Naive thymus-derived CD4-positive, alpha-beta T cell (primary cell): ENCODE measurements at regions of chr1 and their contacts with region 1.

Region 1: DNA sequence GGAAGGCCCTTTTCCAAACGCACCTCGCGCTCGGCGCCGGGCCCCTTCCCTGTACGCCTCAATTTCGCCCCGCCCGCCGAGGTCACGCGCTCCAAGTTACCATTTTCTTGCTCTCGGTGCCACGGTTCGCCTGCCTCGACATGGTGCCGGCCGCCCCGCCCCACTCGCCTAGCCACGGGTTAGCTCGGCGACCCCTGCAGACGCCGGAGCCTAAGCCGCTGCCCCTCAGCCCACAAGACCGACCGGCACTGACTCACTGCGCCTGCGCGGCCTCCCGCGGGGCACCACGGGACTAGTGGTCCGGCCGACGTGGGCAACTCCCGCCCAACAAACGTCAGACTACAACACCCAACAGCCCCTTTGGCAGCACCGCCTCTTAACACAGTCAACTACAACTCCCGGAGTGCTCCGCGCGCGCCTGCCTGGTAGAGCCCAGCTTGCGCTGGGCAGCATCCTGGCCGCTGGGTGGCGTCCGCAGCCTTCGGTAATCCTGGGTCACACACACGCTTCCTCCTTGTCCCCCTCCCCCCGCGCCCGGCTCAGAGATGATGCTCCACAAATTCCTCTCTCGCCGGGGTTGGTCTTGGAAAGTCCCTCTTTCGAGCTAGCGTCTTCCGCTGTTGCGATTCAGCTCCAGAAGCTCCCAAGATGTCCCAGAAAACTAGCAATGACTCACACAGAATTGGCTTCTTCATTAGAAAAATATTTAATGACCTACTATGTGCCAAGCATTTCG is at the start of gene TRAPPC3:
- DNase-seq: peak; percentile 96 to 100 (median 99)
- ATAC-seq: peak; percentile 96
- H3K4me3 ChIP-seq: peak within 1 kb of the TSS; percentile 95
- H3K4me3 Mint-ChIP-seq: peak within 1 kb of the TSS; percentile 90 to 100 (median 98)
- H3K27ac ChIP-seq: peak within 1 kb of the TSS; percentile 91
- H3K27ac Mint-ChIP-seq: peak within 1 kb of the TSS; percentile 97 to 100 (median 98)
- H3K4me1 ChIP-seq: peaks cover 35 to 52% of the 10 kb centered on the region in 2 donors
- H3K4me1 Mint-ChIP-seq: peaks cover 48 to 84% (median 66%) of the 10 kb centered on the region in 7 donors
- H3K27me3 ChIP-seq: no peaks in the 10 kb centered on the region
- H3K27me3 Mint-ChIP-seq: no peaks in the 10 kb centered on the region
- total RNA-seq, gene TRAPPC3: 32.1 to 60.5 (median 47.2) TPM

Region 2: DNA sequence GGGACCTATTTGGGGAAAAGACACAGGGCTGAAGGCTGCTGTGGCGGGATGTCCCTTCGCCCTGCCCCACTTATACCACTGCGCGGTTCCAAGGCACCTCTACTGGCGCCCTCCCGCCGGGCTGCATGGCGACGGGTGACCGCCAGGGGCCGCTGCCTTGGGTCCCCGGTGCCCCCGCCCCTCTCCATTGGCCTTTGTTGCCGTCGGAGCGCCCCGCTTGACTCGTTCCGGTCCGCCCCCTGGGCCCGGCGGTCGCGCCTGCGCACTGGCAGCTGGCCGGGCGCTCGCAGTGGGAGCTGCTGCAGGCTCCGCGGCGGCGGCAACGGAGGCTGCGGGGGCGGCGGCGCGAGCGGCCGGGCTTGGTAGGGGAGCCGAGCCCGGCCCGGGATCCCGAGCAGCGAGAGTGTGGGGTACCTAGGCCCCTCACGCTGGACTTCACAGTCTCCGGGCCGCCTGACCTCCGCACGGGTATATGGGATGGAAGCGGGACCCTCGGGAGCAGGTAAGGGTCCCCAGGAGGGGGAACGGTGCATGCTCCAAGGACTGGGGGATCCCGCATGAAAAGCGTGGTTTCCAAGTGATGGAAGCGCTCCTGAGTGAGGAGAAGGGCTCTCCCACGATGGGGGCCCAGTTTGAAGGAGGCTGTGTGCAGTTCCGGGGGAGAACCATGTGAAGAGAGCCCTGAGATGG is 266.3 kb before region 1 on chr1 and contains the start of gene AGO1:
- CTCF ChIA-PET with region 1: no interaction called
- POLR2A ChIA-PET with region 1: no interaction called
- intact Hi-C with region 1: loop called in 1 of 2 experiments (anchors 1 kb)
- DNase-seq: peak; percentile 94 to 99 (median 97)
- ATAC-seq: peak; percentile 100
- H3K4me3 ChIP-seq: peak within 1 kb of the TSS; percentile 100
- H3K4me3 Mint-ChIP-seq: peak within 1 kb of the TSS; percentile 90 to 98 (median 94)
- H3K27ac ChIP-seq: peak within 1 kb of the TSS; percentile 79
- H3K27ac Mint-ChIP-seq: peak within 1 kb of the TSS; percentile 72 to 92 (median 84)
- H3K4me1 ChIP-seq: peaks cover 9 to 24% of the 10 kb centered on the region in 2 donors
- H3K4me1 Mint-ChIP-seq: peaks cover 37 to 55% (median 51%) of the 10 kb centered on the region in 7 donors
- H3K27me3 ChIP-seq: no peaks in the 10 kb centered on the region
- H3K27me3 Mint-ChIP-seq: peaks cover 0 to 4% (median 0%) of the 10 kb centered on the region in 5 donors
- total RNA-seq, gene AGO1: 22.5 to 28.0 (median 26.9) TPM

Region 3: GRCh38 chr1:35945327-35945726 is 204.1 kb before region 1 on chr1:
- CTCF ChIA-PET with region 1: no interaction called
- POLR2A ChIA-PET with region 1: no interaction called
- intact Hi-C with region 1: no loop called
- DNase-seq: no peak
- ATAC-seq: no peak
- H3K4me3 ChIP-seq: no peak overlapping the region
- H3K4me3 Mint-ChIP-seq: no peak overlapping the region
- H3K27ac ChIP-seq: no peak overlapping the region
- H3K27ac Mint-ChIP-seq: peak overlapping the region in 1 of 9 donors; percentile 58
- H3K4me1 ChIP-seq: peaks cover 8% of the 10 kb centered on the region in 2 donors
- H3K4me1 Mint-ChIP-seq: peaks cover 37 to 64% (median 58%) of the 10 kb centered on the region in 7 donors
- H3K27me3 ChIP-seq: no peaks in the 10 kb centered on the region
- H3K27me3 Mint-ChIP-seq: no peaks in the 10 kb centered on the region

Region 4: GRCh38 chr1:36099681-36100341 is 49.6 kb before region 1 on chr1:
- CTCF ChIA-PET with region 1: interaction called, 4 read pairs
- POLR2A ChIA-PET with region 1: no interaction called
- intact Hi-C with region 1: loop called (anchors 1 kb)
- DNase-seq: peak; percentile 50 to 79 (median 65)
- ATAC-seq: peak; percentile 92
- H3K4me3 ChIP-seq: no peak overlapping the region
- H3K4me3 Mint-ChIP-seq: peak overlapping the region in 5 of 10 donors; percentile 12 to 50 (median 35)
- H3K27ac ChIP-seq: no peak overlapping the region
- H3K27ac Mint-ChIP-seq: peak overlapping the region in 1 of 9 donors; percentile 14
- H3K4me1 ChIP-seq: no peaks in the 10 kb centered on the region
- H3K4me1 Mint-ChIP-seq: peaks cover 0 to 10% (median 2%) of the 10 kb centered on the region in 7 donors
- H3K27me3 ChIP-seq: no peaks in the 10 kb centered on the region
- H3K27me3 Mint-ChIP-seq: no peaks in the 10 kb centered on the region

Region 5: DNA sequence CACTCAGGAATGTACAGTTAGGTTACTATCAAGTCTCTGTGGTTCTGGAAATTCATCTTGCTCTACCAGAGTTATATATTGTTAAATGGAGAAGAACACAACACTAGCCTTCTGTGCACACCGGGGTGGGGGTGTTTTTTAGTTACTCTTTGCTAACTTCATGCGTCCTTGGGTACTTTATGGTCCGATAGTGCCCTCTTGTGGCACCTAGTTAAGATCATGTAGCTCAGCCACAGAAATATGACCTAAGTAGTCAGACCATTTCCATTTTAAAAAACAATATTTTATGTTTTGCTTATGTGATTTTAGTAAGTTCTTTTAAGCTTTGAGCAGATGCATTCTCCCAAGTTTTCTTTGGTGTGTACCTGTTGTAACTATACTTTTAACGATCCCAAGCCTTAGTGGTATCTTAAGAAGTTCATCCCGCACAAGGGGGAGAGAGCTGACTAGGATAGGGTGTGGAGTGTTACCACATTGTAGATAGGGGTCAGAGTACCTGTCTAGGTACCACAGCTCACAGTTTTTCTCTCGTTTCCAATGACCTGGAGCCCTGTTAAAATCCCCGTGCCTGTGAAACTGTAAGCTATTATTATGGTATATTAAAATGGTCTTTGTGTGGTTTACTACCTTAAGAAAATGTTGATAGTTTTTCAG is 136.2 kb after region 1 on chr1:
- CTCF ChIA-PET with region 1: interaction called, 30 read pairs
- POLR2A ChIA-PET with region 1: interaction called, 12 read pairs
- intact Hi-C with region 1: loop called (anchors 1 kb)
- DNase-seq: peak in 7 of 9 donors; percentile 60 to 80 (median 73)
- ATAC-seq: peak; percentile 96
- H3K4me3 ChIP-seq: no peak overlapping the region
- H3K4me3 Mint-ChIP-seq: no peak overlapping the region
- H3K27ac ChIP-seq: no peak overlapping the region
- H3K27ac Mint-ChIP-seq: peak overlapping the region in 8 of 9 donors; percentile 3 to 87 (median 42)
- H3K4me1 ChIP-seq: no peaks in the 10 kb centered on the region
- H3K4me1 Mint-ChIP-seq: peaks cover 4 to 34% (median 17%) of the 10 kb centered on the region in 7 donors
- H3K27me3 ChIP-seq: no peaks in the 10 kb centered on the region
- H3K27me3 Mint-ChIP-seq: no peaks in the 10 kb centered on the region

Region 6: DNA sequence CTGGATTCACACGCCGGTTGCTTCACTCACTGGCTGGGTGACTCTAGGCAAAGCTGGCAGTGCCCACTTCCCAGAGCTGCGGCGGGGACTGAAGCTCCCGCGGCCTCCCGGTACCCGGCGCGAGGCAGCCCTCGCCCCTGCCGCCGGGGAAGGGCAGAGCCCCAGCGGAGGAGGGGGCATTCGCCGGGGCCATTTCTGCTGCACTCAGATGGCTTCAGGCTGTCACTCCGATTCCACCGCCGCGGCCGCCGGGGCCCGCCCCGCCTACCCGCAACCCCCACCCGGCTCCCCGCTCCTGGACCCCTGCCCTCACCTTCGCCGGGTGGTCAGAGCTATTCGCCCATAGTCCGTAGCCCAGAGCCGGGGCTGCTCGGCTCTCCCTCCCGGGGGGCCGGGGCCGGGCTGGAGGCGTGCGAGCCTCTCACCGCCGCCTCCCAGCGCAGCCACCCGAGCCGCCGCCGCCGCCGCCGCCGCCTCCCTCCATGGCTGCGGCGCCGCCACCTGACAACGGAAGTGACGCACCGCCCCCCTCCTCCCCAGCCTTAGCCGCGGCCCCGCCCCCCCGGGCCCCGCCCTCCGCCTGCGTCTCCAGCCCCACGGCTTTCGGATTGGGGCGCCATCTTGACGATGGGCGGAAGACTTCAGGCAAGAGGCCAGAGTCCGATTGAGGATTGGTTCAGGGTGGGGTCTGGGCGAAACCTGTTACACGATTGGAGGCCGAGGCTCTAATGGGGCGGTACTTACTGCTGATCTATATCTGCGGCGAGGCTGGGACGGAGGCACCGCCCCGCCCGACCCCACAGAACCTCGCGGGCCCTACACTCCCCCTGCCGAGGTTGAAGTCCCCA is 236.2 kb after region 1 on chr1 and contains the start of gene STK40:
- CTCF ChIA-PET with region 1: no interaction called
- POLR2A ChIA-PET with region 1: no interaction called
- intact Hi-C with region 1: loop called (anchors 1 kb)
- DNase-seq: peak; percentile 83 to 99 (median 96)
- ATAC-seq: peak; percentile 92
- H3K4me3 ChIP-seq: peak within 1 kb of the TSS; percentile 96
- H3K4me3 Mint-ChIP-seq: peak within 1 kb of the TSS; percentile 85 to 95 (median 93)
- H3K27ac ChIP-seq: peak within 1 kb of the TSS; percentile 97
- H3K27ac Mint-ChIP-seq: peak within 1 kb of the TSS; percentile 95 to 99 (median 97)
- H3K4me1 ChIP-seq: peaks cover 26 to 29% of the 10 kb centered on the region in 2 donors
- H3K4me1 Mint-ChIP-seq: peaks cover 52 to 67% (median 57%) of the 10 kb centered on the region in 7 donors
- H3K27me3 ChIP-seq: no peaks in the 10 kb centered on the region
- H3K27me3 Mint-ChIP-seq: no peaks in the 10 kb centered on the region
- total RNA-seq, gene STK40: 27.6 to 56.8 (median 48.2) TPM

Region 7: GRCh38 chr1:36463803-36464604 is 314.6 kb after region 1 on chr1 and contains the start of gene MRPS15:
- CTCF ChIA-PET with region 1: no interaction called
- POLR2A ChIA-PET with region 1: no interaction called
- intact Hi-C with region 1: loop called (anchors 1 kb)
- DNase-seq: peak; percentile 85 to 95 (median 93)
- ATAC-seq: peak; percentile 99
- H3K4me3 ChIP-seq: peak within 1 kb of the TSS; percentile 85
- H3K4me3 Mint-ChIP-seq: peak within 1 kb of the TSS; percentile 86 to 100 (median 97)
- H3K27ac ChIP-seq: peak within 1 kb of the TSS; percentile 91
- H3K27ac Mint-ChIP-seq: peak within 1 kb of the TSS; percentile 90 to 99 (median 98)
- H3K4me1 ChIP-seq: peaks cover 7 to 13% of the 10 kb centered on the region in 2 donors
- H3K4me1 Mint-ChIP-seq: peaks cover 18 to 54% (median 43%) of the 10 kb centered on the region in 7 donors
- H3K27me3 ChIP-seq: no peaks in the 10 kb centered on the region
- H3K27me3 Mint-ChIP-seq: no peaks in the 10 kb centered on the region
- total RNA-seq, gene MRPS15: 30.2 to 84.0 (median 36.3) TPM

Region 8: DNA sequence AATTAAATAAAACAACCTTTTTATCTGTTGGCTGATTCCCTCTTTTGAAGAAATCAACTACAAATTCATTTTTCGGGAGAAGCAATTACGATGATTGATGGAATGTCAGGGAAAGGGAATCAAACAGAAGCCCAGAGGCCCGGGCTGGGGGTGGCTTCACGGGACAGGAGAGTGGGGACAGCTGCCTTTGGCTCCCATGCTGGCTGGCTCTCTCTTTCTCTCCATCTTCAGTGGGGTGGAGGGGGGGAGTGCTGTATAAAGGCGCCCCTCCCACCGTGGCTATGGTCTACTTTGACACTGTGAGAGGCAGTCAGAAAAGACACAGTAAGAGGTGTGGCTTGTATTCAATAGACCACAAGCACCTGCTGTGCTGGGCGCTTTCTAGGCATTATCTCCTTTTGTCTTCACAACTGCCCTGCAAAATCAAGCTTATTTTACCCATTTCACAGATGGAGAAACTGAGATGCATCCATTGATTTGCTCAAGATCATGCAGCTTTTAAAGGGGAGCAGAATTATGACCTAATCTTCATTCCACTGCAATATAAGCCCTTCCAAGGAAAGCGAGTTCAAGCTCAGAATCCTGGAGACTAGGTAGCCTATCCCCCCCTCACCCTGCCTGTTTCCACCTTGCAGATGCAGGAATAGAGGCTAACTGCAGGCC is 792.0 kb after region 1 on chr1:
- CTCF ChIA-PET with region 1: no interaction called
- POLR2A ChIA-PET with region 1: no interaction called
- intact Hi-C with region 1: no loop called
- DNase-seq: no peak
- ATAC-seq: no peak
- H3K4me3 ChIP-seq: no peak overlapping the region
- H3K4me3 Mint-ChIP-seq: no peak overlapping the region
- H3K27ac ChIP-seq: no peak overlapping the region
- H3K27ac Mint-ChIP-seq: no peak overlapping the region
- H3K4me1 ChIP-seq: no peaks in the 10 kb centered on the region
- H3K4me1 Mint-ChIP-seq: no peaks in the 10 kb centered on the region
- H3K27me3 ChIP-seq: no peaks in the 10 kb centered on the region
- H3K27me3 Mint-ChIP-seq: peaks cover 0 to 65% (median 27%) of the 10 kb centered on the region in 5 donors